H1 (cell line): ENCODE measurements at regions of chr9 and their contacts with region 1.

Region 1: GRCh38 chr9:135440620-135441019 is 39.0 kb upstream of the PPP1R26 start:
- DNase-seq: no peak
- H3K4me3 ChIP-seq: no peak overlapping the region
- H3K27ac ChIP-seq: no peak overlapping the region
- H3K4me1 ChIP-seq: no peaks in the 10 kb centered on the region; a peak in 1 of 7 replicates
- H3K27me3 ChIP-seq: no peaks in the 10 kb centered on the region
- CTCF ChIP-seq: no peak
- EP300 ChIP-seq: no peak
- POLR2A ChIP-seq: no peak
- RAD21 ChIP-seq: no peak

Region 2: GRCh38 chr9:135455401-135456030 is 14.9 kb after region 1 on chr9:
- CTCF ChIA-PET with region 1: interaction called, 11 read pairs
- POLR2A ChIA-PET with region 1: interaction called, 6 read pairs
- DNase-seq: no peak
- H3K4me3 ChIP-seq: no peak overlapping the region
- H3K27ac ChIP-seq: no peak overlapping the region
- H3K4me1 ChIP-seq: no peaks in the 10 kb centered on the region
- H3K27me3 ChIP-seq: no peaks in the 10 kb centered on the region
- CTCF ChIP-seq: no peak
- EP300 ChIP-seq: no peak
- POLR2A ChIP-seq: no peak
- RAD21 ChIP-seq: no peak

Region 3: GRCh38 chr9:135468866-135469521 is 28.4 kb after region 1 on chr9:
- CTCF ChIA-PET with region 1: interaction called, 47 read pairs
- POLR2A ChIA-PET with region 1: no interaction called
- DNase-seq: no peak
- H3K4me3 ChIP-seq: no peak overlapping the region
- H3K27ac ChIP-seq: no peak overlapping the region
- H3K4me1 ChIP-seq: peaks cover 3 to 12% (median 8%) of the 10 kb centered on the region in 4 experiments
- H3K27me3 ChIP-seq: no peaks in the 10 kb centered on the region
- CTCF ChIP-seq: no peak
- EP300 ChIP-seq: no peak
- POLR2A ChIP-seq: no peak
- RAD21 ChIP-seq: no peak

Region 4: DNA sequence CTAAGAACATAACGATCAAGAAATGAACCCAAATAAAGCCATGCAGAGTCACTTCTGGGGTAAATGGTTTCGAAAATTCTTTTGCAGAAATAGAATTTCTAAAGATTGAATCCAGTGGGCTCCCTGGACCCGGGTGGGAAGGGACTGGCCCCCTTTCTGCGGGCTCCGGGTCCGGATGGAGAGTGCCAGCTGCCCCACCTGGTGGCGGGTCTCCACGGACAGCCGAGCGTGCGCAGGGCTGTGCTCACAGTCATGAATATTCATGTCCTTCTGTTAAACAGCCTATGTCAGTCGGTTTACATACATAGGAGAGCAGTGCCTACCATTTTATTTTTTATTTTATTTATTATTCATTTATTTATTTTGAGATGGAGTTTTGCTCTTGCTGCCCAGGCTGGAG is 34.3 kb after region 1 on chr9:
- CTCF ChIA-PET with region 1: interaction called, 47 read pairs
- POLR2A ChIA-PET with region 1: no interaction called
- DNase-seq: peak in 1 of 2 experiments; percentile 83
- H3K4me3 ChIP-seq: no peak overlapping the region
- H3K27ac ChIP-seq: no peak overlapping the region
- H3K4me1 ChIP-seq: peaks cover 3 to 14% (median 8%) of the 10 kb centered on the region in 4 experiments
- H3K27me3 ChIP-seq: no peaks in the 10 kb centered on the region
- CTCF ChIP-seq: peak; percentile 60 to 80 (median 76)
- EP300 ChIP-seq: no peak
- POLR2A ChIP-seq: no peak
- RAD21 ChIP-seq: peak; percentile 58 to 65

Region 5: DNA sequence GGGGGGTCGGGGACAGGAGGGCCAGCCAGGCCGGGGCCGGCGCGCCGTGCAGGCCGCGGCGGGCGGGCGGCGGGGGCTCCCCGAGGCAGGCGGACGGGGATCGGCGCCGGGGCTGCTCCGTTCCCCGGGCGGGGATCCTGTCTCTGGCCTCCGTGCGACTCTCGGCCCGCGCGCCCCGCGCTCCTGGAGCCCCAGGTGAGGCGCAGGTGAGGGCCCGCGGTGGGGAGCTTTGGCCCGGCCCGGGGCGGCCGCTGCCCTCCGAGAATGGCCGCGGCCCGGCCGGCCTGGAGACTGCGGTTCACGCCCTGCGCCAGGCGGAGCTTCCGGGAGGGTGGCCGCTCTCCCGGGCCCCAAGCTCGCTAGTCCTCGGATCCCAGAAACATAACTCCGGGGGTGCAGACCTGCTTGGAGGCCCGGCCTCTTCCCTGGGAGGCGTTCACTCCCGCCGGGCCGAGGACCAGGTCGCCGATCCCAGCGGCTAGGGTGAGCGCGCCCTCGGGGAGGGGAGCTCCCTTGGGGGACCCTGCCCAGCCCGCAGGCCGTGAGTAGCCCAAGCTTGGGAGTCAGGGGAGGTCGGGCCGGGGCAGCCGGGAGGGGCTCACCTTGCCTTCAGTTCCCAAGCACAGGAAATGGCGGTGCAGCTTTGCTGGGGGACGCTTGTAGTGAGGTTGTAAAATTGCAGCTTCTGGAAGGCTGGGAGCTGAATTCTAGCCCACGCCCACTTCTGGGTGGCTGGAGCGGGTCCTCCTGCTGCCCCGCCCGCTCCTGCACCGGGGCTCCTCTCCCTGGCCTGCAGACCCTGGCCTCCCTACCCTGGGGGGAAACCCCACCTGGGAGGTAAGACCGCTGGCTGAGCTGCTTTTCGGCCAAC is 39.7 kb after region 1 on chr9:
- CTCF ChIA-PET with region 1: interaction called, 47 read pairs
- POLR2A ChIA-PET with region 1: no interaction called
- DNase-seq: peak in 1 of 2 experiments; percentile 69
- H3K4me3 ChIP-seq: peak overlapping the region; percentile 65 to 93 (median 80)
- H3K27ac ChIP-seq: no peak overlapping the region; the same call in 1 of the 2 replicates
- H3K4me1 ChIP-seq: peaks cover 0 to 8% (median 3%) of the 10 kb centered on the region in 4 experiments; a peak in 6 of 7 replicates
- H3K27me3 ChIP-seq: no peaks in the 10 kb centered on the region
- CTCF ChIP-seq: no peak
- EP300 ChIP-seq: no peak
- POLR2A ChIP-seq: no peak
- RAD21 ChIP-seq: no peak

Region 6: GRCh38 chr9:135551031-135551430 is 110.4 kb after region 1 on chr9:
- CTCF ChIA-PET with region 1: no interaction called
- POLR2A ChIA-PET with region 1: no interaction called
- DNase-seq: no peak
- H3K4me3 ChIP-seq: no peak overlapping the region
- H3K27ac ChIP-seq: no peak overlapping the region
- H3K4me1 ChIP-seq: no peaks in the 10 kb centered on the region; a peak in 1 of 7 replicates
- H3K27me3 ChIP-seq: no peaks in the 10 kb centered on the region; a peak in 1 of 7 replicates
- CTCF ChIP-seq: no peak
- EP300 ChIP-seq: no peak
- POLR2A ChIP-seq: no peak
- RAD21 ChIP-seq: no peak